ENCODE measurements at regions of chr10 and their contacts with region 1.

Region 1: DNA sequence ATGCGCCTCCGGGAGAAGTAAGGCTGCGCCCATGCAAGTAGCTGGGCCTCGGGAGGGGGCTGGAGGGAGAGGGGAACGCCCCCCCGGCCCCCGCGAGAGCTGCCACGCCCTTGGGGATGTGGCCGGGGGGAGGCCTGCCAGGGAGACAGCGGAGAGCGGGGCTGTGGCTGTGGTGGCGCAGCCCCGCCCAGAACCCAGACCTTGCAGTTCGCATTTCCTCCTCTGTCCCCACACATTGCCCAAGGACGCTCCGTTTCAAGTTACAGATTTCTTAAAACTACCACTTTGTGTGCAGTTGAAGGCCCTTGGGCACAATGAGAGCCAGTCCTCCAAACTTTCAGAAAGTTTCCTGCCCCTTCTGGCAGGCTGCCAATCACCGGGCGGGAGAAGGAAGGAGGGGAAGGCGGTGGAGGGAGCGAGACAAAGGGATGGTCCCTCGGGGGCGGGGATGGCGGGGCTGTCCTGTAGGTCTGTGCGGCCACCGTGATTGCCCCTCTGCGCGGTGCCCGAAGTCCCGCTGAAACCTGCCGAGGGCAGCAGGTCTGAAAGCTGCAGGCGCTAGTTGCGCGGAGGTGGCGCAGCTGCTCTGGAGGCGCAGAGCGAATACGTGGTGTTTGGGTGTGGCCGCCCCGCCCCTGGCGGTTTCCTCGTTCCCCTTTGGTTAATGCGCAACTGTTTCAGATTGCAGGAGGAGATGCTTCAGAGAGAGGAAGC is 2.1 kb downstream of the VIM start:
- DNase-seq: peak; percentile 85 to 89
- H3K4me3 ChIP-seq: peak overlapping the region; percentile 58
- H3K4me3 Mint-ChIP-seq: peak overlapping the region; percentile 78
- H3K27ac Mint-ChIP-seq: peak overlapping the region; percentile 58
- H3K4me1 ChIP-seq: peaks cover 21% of the 10 kb centered on the region
- H3K4me1 Mint-ChIP-seq: no peaks in the 10 kb centered on the region
- H3K27me3 ChIP-seq: no peaks in the 10 kb centered on the region; the same call in none of the 2 replicates
- H3K27me3 Mint-ChIP-seq: peaks cover 16% of the 10 kb centered on the region
- CTCF ChIP-seq: no peak

Region 2: GRCh38 chr10:16817125-16818019 is 412.8 kb before region 1 on chr10 and contains the start of gene RSU1:
- CTCF ChIA-PET with region 1: interaction called, 3 read pairs
- POLR2A ChIA-PET with region 1: interaction called, 4 read pairs
- intact Hi-C with region 1: loop called (anchors 1 kb)
- DNase-seq: peak; percentile 100
- H3K4me3 ChIP-seq: peak within 1 kb of the TSS; percentile 84
- H3K4me3 Mint-ChIP-seq: peak within 1 kb of the TSS; percentile 97
- H3K27ac Mint-ChIP-seq: peak within 1 kb of the TSS; percentile 89
- H3K4me1 ChIP-seq: peaks cover 4% of the 10 kb centered on the region
- H3K4me1 Mint-ChIP-seq: peaks cover 20% of the 10 kb centered on the region
- H3K27me3 ChIP-seq: no peaks in the 10 kb centered on the region
- H3K27me3 Mint-ChIP-seq: no peaks in the 10 kb centered on the region
- CTCF ChIP-seq: no peak
- total RNA-seq, gene RSU1: 62.0 and 66.6 TPM in 2 replicates

Region 3: GRCh38 chr10:16843252-16843870 is 386.8 kb before region 1 on chr10:
- CTCF ChIA-PET with region 1: interaction called, 5 read pairs
- POLR2A ChIA-PET with region 1: no interaction called
- intact Hi-C with region 1: loop called (anchors 1 kb)
- DNase-seq: peak in 1 of 2 experiments; percentile 69
- H3K4me3 ChIP-seq: no peak overlapping the region
- H3K4me3 Mint-ChIP-seq: no peak overlapping the region
- H3K27ac Mint-ChIP-seq: no peak overlapping the region
- H3K4me1 ChIP-seq: no peaks in the 10 kb centered on the region
- H3K4me1 Mint-ChIP-seq: no peaks in the 10 kb centered on the region
- H3K27me3 ChIP-seq: no peaks in the 10 kb centered on the region; the same call in 1 of the 2 replicates
- H3K27me3 Mint-ChIP-seq: peaks cover 9% of the 10 kb centered on the region
- CTCF ChIP-seq: peak; percentile 58 to 81

Region 4: GRCh38 chr10:16891375-16892313 is 338.5 kb before region 1 on chr10:
- CTCF ChIA-PET with region 1: no interaction called
- POLR2A ChIA-PET with region 1: no interaction called
- intact Hi-C with region 1: loop called (anchors 2 kb)
- DNase-seq: peak; percentile 56 to 66
- H3K4me3 ChIP-seq: no peak overlapping the region
- H3K4me3 Mint-ChIP-seq: peak overlapping the region; percentile 60
- H3K27ac Mint-ChIP-seq: peak overlapping the region; percentile 86
- H3K4me1 ChIP-seq: no peaks in the 10 kb centered on the region
- H3K4me1 Mint-ChIP-seq: peaks cover 7% of the 10 kb centered on the region
- H3K27me3 ChIP-seq: no peaks in the 10 kb centered on the region
- H3K27me3 Mint-ChIP-seq: peaks cover 9% of the 10 kb centered on the region
- CTCF ChIP-seq: peak; percentile 26 to 73

Region 5: GRCh38 chr10:17122726-17123661 is 107.1 kb before region 1 on chr10:
- CTCF ChIA-PET with region 1: interaction called, 3 read pairs
- POLR2A ChIA-PET with region 1: no interaction called
- intact Hi-C with region 1: loop called (anchors 2 kb)
- DNase-seq: no peak
- H3K4me3 ChIP-seq: no peak overlapping the region
- H3K4me3 Mint-ChIP-seq: peak overlapping the region; percentile 51
- H3K27ac Mint-ChIP-seq: peak overlapping the region; percentile 68
- H3K4me1 ChIP-seq: peaks cover 76% of the 10 kb centered on the region
- H3K4me1 Mint-ChIP-seq: peaks cover 67% of the 10 kb centered on the region
- H3K27me3 ChIP-seq: no peaks in the 10 kb centered on the region
- H3K27me3 Mint-ChIP-seq: no peaks in the 10 kb centered on the region
- CTCF ChIP-seq: no peak

Region 6: DNA sequence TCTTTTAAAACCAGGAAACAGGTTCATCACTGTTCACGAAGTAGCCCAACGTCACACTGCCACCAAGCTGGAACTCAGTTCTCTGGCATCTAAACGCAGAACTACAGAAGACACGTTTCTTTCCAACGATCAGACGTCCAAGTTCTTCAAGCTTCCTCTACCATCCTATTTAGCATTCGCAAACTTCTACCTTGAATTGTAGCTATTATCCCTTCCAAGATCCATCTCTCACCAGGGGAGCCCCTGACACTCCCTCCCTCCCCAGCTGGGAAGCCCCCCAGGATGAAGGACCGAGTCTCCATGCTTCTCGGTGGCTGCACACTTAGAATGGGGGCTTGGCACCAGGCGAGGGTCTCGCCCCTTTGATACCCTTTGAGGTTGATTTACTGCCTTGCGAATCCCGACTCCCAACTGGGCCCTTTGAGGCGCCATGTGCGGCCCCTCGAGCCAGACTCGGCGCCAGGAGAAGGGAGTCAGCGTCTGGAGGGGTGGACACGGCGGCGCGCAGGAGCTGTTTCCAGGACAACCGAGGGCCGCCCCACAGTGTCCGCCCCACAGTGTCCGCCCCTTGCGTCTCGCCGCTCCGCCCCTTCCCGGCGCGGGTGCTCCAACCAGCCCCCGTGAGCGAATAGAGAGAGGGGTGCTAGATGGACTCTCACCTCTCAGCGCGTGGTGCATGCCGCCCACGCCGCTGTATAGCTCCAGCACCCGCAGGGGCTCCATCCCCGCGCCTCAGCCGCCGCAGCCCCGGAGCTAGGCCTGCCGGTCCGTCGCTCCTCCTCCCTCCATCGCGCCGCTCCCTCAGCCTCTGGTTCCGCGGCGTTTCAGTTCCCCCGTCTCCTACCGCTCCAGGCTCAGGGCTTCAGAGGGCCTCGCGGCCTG is 29.0 kb before region 1 on chr10 and contains the start of gene TRDMT1:
- CTCF ChIA-PET with region 1: interaction called, 5 read pairs
- POLR2A ChIA-PET with region 1: no interaction called
- intact Hi-C with region 1: loop called (anchors 1 kb)
- DNase-seq: peak; percentile 92 to 93
- H3K4me3 ChIP-seq: peak within 1 kb of the TSS; percentile 59
- H3K4me3 Mint-ChIP-seq: peak within 1 kb of the TSS; percentile 99
- H3K27ac Mint-ChIP-seq: peak within 1 kb of the TSS; percentile 98
- H3K4me1 ChIP-seq: peaks cover 20% of the 10 kb centered on the region
- H3K4me1 Mint-ChIP-seq: peaks cover 36% of the 10 kb centered on the region
- H3K27me3 ChIP-seq: no peaks in the 10 kb centered on the region
- H3K27me3 Mint-ChIP-seq: no peaks in the 10 kb centered on the region
- CTCF ChIP-seq: peak in 1 of 2 experiments; percentile 6
- total RNA-seq, gene TRDMT1: 8.6 and 11.0 TPM in 2 replicates

Measured in Caco-2 (cell line).